Astrocyte of the cerebellum (primary cell): ENCODE measurements at regions of chr10 and their contacts with region 1.

Region 1: GRCh38 chr10:100677290-100677945 is 68.0 kb upstream of the PAX2 start:
- DNase-seq: no peak
- H3K4me3 ChIP-seq: no peak overlapping the region
- CTCF ChIP-seq: no peak

Region 2: GRCh38 chr10:100725071-100725471 is 47.7 kb after region 1 on chr10:
- in situ Hi-C with region 1: no loop called
- DNase-seq: no peak
- H3K4me3 ChIP-seq: no peak overlapping the region
- CTCF ChIP-seq: no peak

Region 3: GRCh38 chr10:100775386-100775785 is 98.0 kb after region 1 on chr10:
- in situ Hi-C with region 1: loop called (anchors 5 kb)
- DNase-seq: no peak
- H3K4me3 ChIP-seq: no peak overlapping the region
- CTCF ChIP-seq: no peak